Activated CD4-positive, alpha-beta T cell treated with anti-CD3 and anti-CD28 coated beads, Interleukin-2, amount 10 ng/mL, durations not matched to agents 24 days and 14 days (primary cell): ENCODE measurements at regions of chr10 and their contacts with region 1.

Region 1: DNA sequence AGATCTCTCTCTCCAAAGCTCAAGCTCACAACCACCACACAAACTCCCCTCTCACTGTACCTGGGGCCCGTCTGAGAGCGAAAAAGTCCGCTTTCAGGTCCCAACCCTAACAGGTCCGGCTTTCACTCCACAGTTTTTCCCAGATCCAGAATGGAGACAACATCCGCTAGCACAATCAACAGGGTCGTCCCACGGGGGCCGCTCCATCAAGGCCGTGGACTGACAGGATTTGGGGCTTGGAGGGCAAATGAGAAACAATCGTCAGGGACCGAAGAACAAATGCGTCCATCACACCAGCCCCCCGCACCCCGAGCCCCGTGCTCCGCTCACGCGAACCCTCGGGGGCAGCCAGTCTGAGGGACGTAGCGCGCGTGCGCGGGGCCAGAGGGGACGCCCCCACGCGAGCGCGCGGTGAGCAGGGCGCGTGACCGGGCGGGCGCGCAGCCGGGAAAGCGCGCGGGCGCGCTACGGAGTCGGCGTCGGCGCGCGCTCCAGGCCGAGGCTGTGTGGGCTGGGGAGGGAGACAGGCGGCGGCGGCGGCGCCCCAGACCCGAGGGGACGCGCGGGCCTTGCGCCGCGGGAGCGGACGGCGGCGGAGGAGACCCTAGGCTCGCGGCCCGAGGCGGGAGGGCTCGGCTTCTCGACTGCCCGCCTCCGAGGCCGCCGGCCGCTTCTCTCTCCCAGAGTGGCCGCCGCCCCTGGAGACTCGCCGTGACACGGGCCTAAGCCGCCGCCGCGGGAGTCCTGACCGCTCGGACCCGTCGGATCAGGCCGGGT is at the start of gene SLK:
- DNase-seq: peak; percentile 96
- H3K4me3 Mint-ChIP-seq: peak within 1 kb of the TSS; percentile 97
- H3K27ac Mint-ChIP-seq: peak within 1 kb of the TSS; percentile 93
- H3K4me1 Mint-ChIP-seq: peaks cover 32% of the 10 kb centered on the region
- H3K27me3 Mint-ChIP-seq: no peaks in the 10 kb centered on the region
- total RNA-seq, gene SLK: 22.9 and 27.1 TPM in 2 replicates

Region 2: GRCh38 chr10:103584216-103585010 is 382.4 kb before region 1 on chr10:
- intact Hi-C with region 1: loop called (anchors 10 kb)
- DNase-seq: peak; percentile 87
- H3K4me3 Mint-ChIP-seq: peak overlapping the region; percentile 86
- H3K27ac Mint-ChIP-seq: peak overlapping the region; percentile 70
- H3K4me1 Mint-ChIP-seq: peaks cover 4% of the 10 kb centered on the region
- H3K27me3 Mint-ChIP-seq: peaks cover 9% of the 10 kb centered on the region

Region 3: DNA sequence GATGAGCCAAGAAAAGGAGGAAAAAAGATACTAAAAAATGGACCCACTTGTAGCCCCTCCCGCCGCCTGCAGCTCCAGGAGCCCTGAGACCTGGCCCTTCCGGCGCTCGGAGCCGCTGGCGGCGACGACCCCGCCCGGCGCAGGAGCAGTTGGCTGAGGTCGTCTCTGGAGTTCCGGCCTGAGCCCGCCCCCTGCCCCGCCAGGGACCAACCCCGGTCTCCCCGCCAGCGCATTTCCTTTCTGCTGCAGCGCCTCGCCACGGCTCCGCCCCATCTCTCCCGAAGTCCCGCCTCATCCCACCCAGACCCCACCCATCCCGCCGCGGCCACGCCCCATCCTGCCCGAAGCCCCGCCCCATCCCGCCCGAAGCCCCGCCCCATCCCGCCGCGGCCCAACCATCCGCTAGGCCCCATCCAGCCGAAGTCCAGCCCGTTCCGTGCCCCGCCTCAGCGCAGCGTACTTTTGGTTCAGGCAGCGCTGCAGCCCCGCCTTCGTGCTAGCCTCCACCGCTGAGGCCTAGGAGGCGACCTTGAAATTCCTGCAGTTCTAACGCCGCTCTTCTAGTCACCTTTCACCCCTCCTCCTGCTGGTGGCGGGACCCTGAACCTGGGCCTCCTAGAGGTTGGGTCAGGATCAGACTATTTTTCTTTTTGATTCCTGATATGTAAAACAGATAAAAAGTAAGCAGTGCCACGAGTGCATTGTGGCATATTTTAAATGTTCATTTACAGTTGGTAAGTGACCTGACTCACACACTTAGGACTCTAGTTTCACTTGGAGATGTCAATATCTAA is 48.6 kb before region 1 on chr10 and contains the start of gene STN1:
- intact Hi-C with region 1: loop called (anchors 2 kb)
- DNase-seq: peak; percentile 98
- H3K4me3 Mint-ChIP-seq: peak within 1 kb of the TSS; percentile 97
- H3K27ac Mint-ChIP-seq: peak within 1 kb of the TSS; percentile 97
- H3K4me1 Mint-ChIP-seq: peaks cover 33% of the 10 kb centered on the region
- H3K27me3 Mint-ChIP-seq: no peaks in the 10 kb centered on the region
- total RNA-seq, gene STN1: 23.6 and 24.1 TPM in 2 replicates

Region 4: DNA sequence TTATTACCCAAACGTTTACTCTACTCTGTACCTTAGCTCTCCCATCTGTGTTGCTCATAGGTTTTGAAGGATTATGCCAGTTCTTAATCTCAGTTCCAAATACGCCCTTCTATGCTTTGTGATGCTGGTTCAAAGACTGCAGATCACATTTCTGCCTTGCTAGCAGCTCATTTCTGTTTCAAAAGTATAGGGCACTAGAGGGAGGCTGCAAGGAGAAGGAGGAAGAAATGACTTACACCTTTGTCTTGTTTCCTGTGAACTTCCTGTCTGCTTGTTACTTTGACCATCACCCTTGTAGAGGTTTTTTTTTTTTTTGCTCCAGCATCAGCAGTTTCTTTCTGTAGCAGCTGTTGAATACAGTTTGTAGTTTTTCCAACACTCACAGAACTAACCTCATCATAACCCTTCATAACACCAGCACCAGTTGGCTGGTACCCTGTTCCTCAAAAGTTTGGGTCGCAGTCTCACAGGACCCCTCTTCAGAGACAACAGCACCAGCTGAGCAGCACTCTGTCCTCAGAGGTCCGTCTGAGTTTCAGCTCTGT is 16.6 kb after region 1 on chr10:
- intact Hi-C with region 1: loop called (anchors 2 kb)
- DNase-seq: peak; percentile 77
- H3K4me3 Mint-ChIP-seq: peak overlapping the region; percentile 79
- H3K27ac Mint-ChIP-seq: peak overlapping the region; percentile 78
- H3K4me1 Mint-ChIP-seq: peaks cover 49% of the 10 kb centered on the region
- H3K27me3 Mint-ChIP-seq: no peaks in the 10 kb centered on the region

Region 5: GRCh38 chr10:104231784-104232612 is 265.1 kb after region 1 on chr10 and contains the start of gene CFAP43:
- intact Hi-C with region 1: loop called (anchors 10 kb)
- DNase-seq: peak; percentile 100
- H3K4me3 Mint-ChIP-seq: peak within 1 kb of the TSS; percentile 87
- H3K27ac Mint-ChIP-seq: peak within 1 kb of the TSS; percentile 72
- H3K4me1 Mint-ChIP-seq: peaks cover 8% of the 10 kb centered on the region
- H3K27me3 Mint-ChIP-seq: peaks cover 42% of the 10 kb centered on the region
- total RNA-seq, gene CFAP43: not detected in 2 replicates

Region 6: GRCh38 chr10:104254493-104255310 is 287.8 kb after region 1 on chr10 and contains the start of gene GSTO1:
- intact Hi-C with region 1: loop called (anchors 5 kb)
- DNase-seq: peak; percentile 87
- H3K4me3 Mint-ChIP-seq: peak within 1 kb of the TSS; percentile 96
- H3K27ac Mint-ChIP-seq: peak within 1 kb of the TSS; percentile 95
- H3K4me1 Mint-ChIP-seq: peaks cover 46% of the 10 kb centered on the region
- H3K27me3 Mint-ChIP-seq: peaks cover 14% of the 10 kb centered on the region
- total RNA-seq, gene GSTO1: 136 and 140 TPM in 2 replicates